ENCODE measurements at regions of chr3 and their contacts with region 1.

Region 1: GRCh38 chr3:128603811-128604775 is 46.5 kb downstream of the RPN1 start:
- DNase-seq: no peak
- CTCF ChIP-seq: no peak

Region 2: DNA sequence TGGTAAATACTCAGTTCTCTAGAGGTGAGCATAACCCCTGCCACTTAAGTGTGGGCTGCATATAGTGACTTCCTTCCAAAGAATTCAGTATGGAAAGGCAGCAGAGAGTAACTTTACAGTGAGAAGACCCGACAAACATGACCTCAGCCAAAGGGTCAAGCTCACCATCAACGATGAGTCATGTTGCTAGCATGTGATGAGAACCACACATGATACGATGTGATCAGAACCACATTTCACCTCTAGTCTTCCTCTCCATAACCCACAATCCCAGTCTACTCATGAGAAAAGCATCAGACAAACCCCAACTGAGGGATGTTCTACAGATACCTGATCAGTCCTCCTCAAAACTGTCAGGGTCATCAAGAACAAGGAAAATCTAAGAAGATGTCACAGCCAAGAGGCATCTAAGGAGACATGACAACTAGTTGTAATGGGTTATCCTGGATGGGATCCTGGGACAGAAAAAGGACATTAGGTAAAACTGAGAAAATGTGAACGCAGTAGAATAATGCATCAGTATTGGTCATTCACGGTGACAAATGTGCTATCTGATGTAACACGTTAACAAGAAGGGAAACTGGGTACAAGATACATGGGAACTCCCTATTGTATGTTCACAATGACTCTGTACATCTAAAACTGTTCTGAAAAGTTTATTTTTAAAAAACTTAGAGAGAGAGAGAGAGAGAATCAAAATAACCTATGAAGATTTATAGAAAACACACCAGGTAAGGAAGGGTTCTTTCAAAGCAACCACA is 523.6 kb before region 1 on chr3:
- in situ Hi-C with region 1: loop called (anchors 10 kb)
- DNase-seq: no peak
- CTCF ChIP-seq: no peak